GM18951 (cell line): ENCODE measurements at regions of chr3 and their contacts with region 1.

Region 1: GRCh38 chr3:42780892-42781700 is 8.0 kb upstream of the CCDC13 start:
- POLR2A ChIP-seq: no peak

Region 2: DNA sequence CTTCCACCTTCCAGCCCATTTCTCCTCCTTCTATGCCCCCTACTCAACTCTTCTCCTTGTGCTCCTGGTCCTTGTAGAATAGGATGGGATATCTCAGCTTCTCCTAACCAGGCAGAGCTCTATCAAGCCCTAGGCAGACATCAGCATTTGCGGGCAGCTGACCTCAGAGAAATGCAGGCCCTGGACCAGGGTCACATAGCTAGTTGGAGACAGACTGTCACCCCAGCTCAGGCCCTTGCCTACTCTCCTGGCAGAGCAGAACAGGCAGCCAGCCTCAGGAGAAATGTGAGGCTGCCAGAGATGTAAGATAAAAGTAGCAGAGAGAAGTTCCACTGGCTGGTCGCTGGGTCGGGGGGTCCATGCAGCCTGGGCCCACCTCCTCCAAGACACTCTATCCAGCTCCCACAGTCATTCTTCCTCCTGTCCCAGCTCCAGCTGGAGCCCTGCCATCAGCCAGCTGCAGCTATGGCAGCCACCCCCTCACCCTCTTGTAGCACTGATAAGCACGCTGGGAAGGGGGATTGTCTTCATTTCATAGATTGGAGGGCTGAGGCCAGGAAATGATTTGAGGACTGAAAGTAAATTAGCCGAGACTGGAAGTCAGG is 90.6 kb after region 1 on chr3:
- in situ Hi-C with region 1: loop called (anchors 10 kb)
- POLR2A ChIP-seq: no peak